K562 (cell line): ENCODE measurements at regions of chr14 and their contacts with region 1.

Region 1: GRCh38 chr14:103973354-103973753 is 31.0 kb upstream of the RD3L start:
- DNase-seq: peak; percentile 9 to 52 (median 27)
- ATAC-seq: peak; percentile 95
- H3K4me3 ChIP-seq: no peak overlapping the region
- H3K27ac ChIP-seq: no peak overlapping the region
- H3K4me1 ChIP-seq: no peaks in the 10 kb centered on the region; a peak in 2 of 5 replicates
- H3K27me3 ChIP-seq: no peaks in the 10 kb centered on the region; a peak in 1 of 5 replicates
- CTCF ChIP-seq: no peak
- EP300 ChIP-seq: no peak
- POLR2A ChIP-seq: no peak
- RAD21 ChIP-seq: no peak

Region 2: GRCh38 chr14:103920981-103921854 is 52.1 kb before region 1 on chr14:
- CTCF ChIA-PET with region 1: no interaction called
- POLR2A ChIA-PET with region 1: no interaction called
- in situ Hi-C with region 1: no loop called
- intact Hi-C with region 1: loop called (anchors 5 kb)
- DNase-seq: peak; percentile 86 to 94 (median 88)
- ATAC-seq: peak; percentile 95
- H3K4me3 ChIP-seq: peak overlapping the region; percentile 86
- H3K27ac ChIP-seq: peak overlapping the region; percentile 82
- H3K4me1 ChIP-seq: peaks cover 13 to 14% of the 10 kb centered on the region in 2 experiments; a peak in 3 of 5 replicates
- H3K27me3 ChIP-seq: no peaks in the 10 kb centered on the region
- CTCF ChIP-seq: peak; percentile 89 to 93 (median 92)
- EP300 ChIP-seq: peak; percentile 44
- POLR2A ChIP-seq: peak; percentile 84
- RAD21 ChIP-seq: peak in 1 of 2 experiments; percentile 20; a peak in 2 of 4 replicates

Region 3: DNA sequence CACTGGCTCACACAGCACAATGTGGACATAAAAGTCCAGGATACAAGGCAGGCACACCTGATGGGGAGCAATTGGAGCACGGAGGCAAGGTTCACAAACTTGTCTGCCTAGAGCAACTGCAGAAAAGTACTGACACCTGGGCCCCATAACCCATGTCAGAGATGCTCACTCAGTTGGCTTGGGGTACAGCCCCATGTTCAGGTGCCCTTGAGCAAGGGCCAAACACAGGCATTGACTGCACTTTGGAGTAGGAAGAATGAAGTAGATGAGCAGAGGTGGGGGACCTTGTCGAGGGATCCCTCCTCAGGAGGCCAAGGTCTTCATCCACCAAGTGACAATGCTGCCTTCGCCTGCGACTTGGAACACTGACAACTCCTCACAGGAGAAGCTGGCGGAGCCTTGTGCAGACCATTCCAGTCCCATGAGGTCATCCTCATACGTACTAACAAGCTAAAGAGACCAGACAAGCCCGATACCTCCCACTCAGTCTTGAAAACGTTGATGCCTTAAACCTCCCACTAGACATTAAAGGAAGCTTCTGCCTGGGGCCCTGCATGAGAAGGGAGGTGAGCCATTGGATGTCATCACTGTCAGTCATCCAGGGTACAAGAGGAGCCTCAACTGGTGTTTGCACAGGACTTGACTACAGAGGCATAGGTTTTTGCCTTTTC is 563.7 kb after region 1 on chr14:
- CTCF ChIA-PET with region 1: no interaction called
- POLR2A ChIA-PET with region 1: no interaction called
- in situ Hi-C with region 1: no loop called
- intact Hi-C with region 1: no loop called
- DNase-seq: no peak
- ATAC-seq: no peak
- H3K4me3 ChIP-seq: no peak overlapping the region
- H3K27ac ChIP-seq: no peak overlapping the region
- H3K4me1 ChIP-seq: no peaks in the 10 kb centered on the region
- H3K27me3 ChIP-seq: no peaks in the 10 kb centered on the region
- CTCF ChIP-seq: no peak
- EP300 ChIP-seq: no peak
- POLR2A ChIP-seq: no peak
- RAD21 ChIP-seq: no peak